Activated CD4-positive, alpha-beta memory T cell treated with anti-CD3 and anti-CD28 coated beads for 36 hours (primary cell): ENCODE measurements at regions of chr15 and their contacts with region 1.

Region 1: DNA sequence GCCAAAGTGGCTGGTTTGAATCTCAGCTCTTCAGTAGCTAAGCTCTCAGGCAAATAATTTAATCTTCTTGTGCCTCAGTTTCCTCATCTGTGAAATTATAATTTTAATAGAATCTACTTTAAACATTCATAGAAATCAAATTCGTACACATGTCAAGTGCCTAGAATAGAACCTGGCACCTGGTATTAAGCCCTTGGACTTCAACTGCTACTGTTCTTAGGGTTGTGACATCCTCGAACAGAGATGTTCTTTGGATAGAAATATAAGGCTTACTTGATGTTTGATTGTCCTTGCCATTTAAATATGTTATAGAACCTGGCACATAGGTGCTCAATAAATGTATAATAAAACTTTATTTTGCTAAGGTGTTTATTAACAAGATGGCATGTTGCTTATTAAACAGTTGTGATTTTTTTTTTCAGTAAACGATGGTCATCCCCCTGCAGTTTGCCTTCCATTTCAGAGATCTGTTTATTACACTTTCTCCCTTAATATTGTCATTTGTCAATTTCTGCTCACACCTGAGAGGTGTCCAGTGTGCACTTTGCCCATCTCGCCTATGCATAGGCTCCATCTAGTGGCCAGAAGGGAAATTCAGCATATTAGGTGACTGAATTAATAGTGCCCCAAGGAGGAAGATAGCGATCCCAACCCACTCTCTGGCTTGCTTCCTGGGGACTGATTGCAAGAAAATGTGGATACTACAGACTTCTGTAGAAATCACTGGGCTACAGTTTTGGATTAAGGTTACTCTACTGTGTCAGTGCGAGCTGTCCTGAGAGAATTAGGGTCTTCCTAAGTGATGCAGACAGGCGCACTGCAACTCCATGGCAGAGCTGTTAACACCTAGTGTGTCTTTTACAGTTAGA is 10.7 kb downstream of the IGF1R start:
- DNase-seq: peak; percentile 27
- H3K4me3 Mint-ChIP-seq: no peak overlapping the region
- H3K27ac Mint-ChIP-seq: no peak overlapping the region
- H3K4me1 Mint-ChIP-seq: peaks cover 4% of the 10 kb centered on the region
- H3K27me3 Mint-ChIP-seq: peaks cover 8% of the 10 kb centered on the region

Region 2: DNA sequence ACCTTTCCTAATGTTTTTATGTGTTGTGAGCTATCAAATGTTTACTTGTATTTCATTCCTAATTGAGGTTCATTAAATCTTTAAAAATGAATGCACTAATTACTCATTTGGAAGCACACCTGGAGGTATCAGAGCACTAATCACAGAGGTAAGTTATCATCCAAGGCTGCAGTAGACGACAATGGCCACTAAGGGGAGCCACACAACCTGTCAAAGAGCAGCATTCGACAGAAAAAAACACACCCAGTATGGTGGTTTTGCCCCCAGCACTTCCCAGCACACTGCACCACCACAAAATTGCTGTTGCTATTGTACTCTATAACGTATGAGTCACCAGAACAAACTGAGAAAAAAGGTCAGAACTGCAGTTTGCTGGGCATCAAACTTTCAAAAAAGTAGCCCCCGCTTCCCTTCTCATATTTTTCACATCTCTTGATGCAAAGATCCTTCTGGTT is 216.7 kb before region 1 on chr15:
- CTCF ChIA-PET with region 1: interaction called, 3 read pairs
- POLR2A ChIA-PET with region 1: no interaction called
- intact Hi-C with region 1: loop called (anchors 2 kb)
- DNase-seq: peak; percentile 70
- H3K4me3 Mint-ChIP-seq: no peak overlapping the region
- H3K27ac Mint-ChIP-seq: no peak overlapping the region
- H3K4me1 Mint-ChIP-seq: no peaks in the 10 kb centered on the region
- H3K27me3 Mint-ChIP-seq: peaks cover 16% of the 10 kb centered on the region

Region 3: DNA sequence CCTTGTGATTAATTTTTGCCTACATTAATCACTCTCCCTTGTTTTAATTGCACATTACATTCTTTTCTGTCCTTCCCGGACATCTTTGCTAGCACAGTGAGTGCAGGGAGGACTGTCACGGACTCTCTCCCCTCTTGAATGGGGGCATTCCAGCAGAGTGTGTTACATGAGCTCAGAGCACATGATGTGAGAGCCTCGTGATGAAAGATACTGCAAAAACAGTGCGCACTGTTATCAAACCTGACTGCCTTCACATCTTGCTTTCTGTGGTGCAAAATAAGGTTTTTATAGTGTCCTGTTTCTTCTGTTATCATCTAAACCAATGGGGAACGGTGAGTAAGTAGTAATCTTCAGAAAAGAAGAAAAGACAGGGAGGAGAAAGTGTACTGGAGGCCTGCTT is 181.0 kb after region 1 on chr15:
- CTCF ChIA-PET with region 1: no interaction called
- POLR2A ChIA-PET with region 1: no interaction called
- intact Hi-C with region 1: no loop called
- DNase-seq: no peak
- H3K4me3 Mint-ChIP-seq: no peak overlapping the region
- H3K27ac Mint-ChIP-seq: no peak overlapping the region
- H3K4me1 Mint-ChIP-seq: peaks cover 6% of the 10 kb centered on the region
- H3K27me3 Mint-ChIP-seq: peaks cover 2% of the 10 kb centered on the region

Region 4: GRCh38 chr15:98850961-98851573 is 192.0 kb after region 1 on chr15:
- CTCF ChIA-PET with region 1: interaction called, 10 read pairs
- POLR2A ChIA-PET with region 1: no interaction called
- intact Hi-C with region 1: no loop called
- DNase-seq: peak; percentile 84
- H3K4me3 Mint-ChIP-seq: peak overlapping the region; percentile 86
- H3K27ac Mint-ChIP-seq: peak overlapping the region; percentile 96
- H3K4me1 Mint-ChIP-seq: peaks cover 39% of the 10 kb centered on the region
- H3K27me3 Mint-ChIP-seq: no peaks in the 10 kb centered on the region